ENCODE measurements at regions of chr10 and their contacts with region 1.

Region 1: DNA sequence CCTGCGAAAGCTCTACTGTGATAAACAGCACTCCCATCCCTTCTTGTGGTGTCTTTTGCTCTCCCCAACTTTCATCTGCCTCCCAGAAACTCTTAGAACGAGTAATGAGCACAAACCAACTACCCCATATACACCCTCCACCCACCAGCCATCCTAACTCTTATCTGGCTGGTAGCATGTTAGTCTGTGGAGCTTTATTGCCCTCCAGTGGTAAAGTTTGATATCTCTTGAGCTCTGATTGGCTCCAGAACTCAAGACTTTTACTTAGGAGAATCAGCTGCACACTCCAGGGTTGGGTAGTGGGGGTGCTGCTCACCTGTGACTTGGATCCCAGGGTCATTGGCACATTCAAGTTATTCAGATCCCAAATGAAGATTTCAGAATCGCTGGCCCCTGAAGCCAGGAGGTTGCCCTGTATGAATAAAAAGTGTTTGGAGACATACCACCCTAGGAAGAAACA is 10.9 kb downstream of the SEC31B start:
- DNase-seq: peak; percentile 56
- H3K4me3 Mint-ChIP-seq: peak overlapping the region; percentile 38
- H3K27ac Mint-ChIP-seq: peak overlapping the region; percentile 88
- H3K4me1 Mint-ChIP-seq: peaks cover 68% of the 10 kb centered on the region
- H3K27me3 Mint-ChIP-seq: no peaks in the 10 kb centered on the region

Region 2: DNA sequence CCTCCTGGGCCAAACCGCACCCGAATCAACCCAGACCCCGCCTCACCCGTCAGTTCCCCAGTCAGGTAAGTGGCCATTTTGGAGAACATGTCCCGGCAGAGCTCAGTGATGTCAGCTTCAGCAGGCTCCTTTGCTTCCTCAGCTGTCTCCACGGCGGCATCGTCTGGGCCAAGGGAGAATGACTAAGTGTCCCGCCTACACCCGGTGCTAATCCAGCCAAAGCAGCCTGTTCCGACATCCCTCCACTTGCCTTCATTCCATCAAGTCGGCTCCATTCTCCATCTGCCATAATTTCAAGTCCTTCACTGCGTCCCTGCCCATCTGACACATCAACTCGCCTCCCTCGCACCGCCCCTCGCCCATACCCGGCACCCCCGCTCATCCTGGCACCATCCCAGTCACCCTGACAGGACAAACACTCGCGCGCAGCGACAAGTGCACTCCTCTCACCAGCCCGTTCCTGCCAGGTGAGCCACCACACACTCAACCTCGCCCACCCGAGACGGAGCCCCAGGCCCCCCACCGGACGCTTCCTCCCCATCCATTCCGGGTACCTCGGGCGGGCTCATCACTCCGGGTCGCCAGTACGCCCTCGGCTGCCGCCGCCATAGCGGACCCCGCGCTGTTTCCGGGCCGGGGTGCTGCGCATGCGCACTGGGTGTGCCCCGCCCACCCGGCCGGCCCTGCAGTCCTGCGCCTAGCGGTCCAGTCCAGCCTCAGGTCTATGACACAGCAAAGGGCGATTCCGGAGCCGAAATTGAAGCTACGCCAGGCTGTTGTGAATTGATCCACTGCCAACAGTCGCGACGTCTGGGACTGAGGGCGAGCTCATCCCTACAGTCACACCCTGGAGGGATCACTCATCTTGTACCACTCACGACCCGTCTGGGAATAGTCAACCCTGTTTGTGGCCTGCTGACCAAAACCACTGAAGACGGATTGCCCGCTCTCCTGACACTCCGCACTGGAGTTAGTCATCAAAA is 222.4 kb before region 1 on chr10 and contains the start of gene BLOC1S2:
- CTCF ChIA-PET with region 1: interaction called, 3 read pairs
- POLR2A ChIA-PET with region 1: interaction called, 8 read pairs
- intact Hi-C with region 1: loop called (anchors 1 kb)
- DNase-seq: peak; percentile 91
- H3K4me3 Mint-ChIP-seq: peak within 1 kb of the TSS; percentile 98
- H3K27ac Mint-ChIP-seq: peak within 1 kb of the TSS; percentile 99
- H3K4me1 Mint-ChIP-seq: peaks cover 23% of the 10 kb centered on the region
- H3K27me3 Mint-ChIP-seq: peaks cover 1% of the 10 kb centered on the region
- total RNA-seq, gene BLOC1S2: 50.5 to 51.5 TPM

Region 3: DNA sequence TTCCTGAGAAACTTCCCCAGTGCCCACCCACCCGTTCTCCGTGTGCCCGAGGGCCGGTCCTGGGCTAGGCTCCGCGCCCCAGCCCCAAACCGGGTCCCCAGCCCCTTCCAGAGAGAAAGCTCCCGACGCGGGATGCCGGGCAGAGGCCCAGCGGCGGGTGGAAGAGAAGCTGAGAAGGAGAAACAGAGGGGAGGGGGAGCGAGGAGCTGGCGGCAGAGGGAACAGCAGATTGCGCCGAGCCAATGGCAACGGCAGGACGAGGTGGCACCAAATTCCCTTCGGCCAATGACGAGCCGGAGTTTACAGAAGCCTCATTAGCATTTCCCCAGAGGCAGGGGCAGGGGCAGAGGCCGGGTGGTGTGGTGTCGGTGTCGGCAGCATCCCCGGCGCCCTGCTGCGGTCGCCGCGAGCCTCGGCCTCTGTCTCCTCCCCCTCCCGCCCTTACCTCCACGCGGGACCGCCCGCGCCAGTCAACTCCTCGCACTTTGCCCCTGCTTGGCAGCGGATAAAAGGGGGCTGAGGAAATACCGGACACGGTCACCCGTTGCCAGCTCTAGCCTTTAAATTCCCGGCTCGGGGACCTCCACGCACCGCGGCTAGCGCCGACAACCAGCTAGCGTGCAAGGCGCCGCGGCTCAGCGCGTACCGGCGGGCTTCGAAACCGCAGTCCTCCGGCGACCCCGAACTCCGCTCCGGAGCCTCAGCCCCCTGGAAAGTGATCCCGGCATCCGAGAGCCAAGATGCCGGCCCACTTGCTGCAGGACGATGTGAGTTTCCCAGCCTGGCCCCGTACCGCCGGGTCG is 161.8 kb before region 1 on chr10 and contains the start of gene SCD:
- CTCF ChIA-PET with region 1: interaction called, 137 read pairs
- POLR2A ChIA-PET with region 1: interaction called, 28 read pairs
- intact Hi-C with region 1: loop called (anchors 1 kb)
- DNase-seq: peak; percentile 93
- H3K4me3 Mint-ChIP-seq: peak within 1 kb of the TSS; percentile 87
- H3K27ac Mint-ChIP-seq: peak within 1 kb of the TSS; percentile 81
- H3K4me1 Mint-ChIP-seq: peaks cover 39% of the 10 kb centered on the region
- H3K27me3 Mint-ChIP-seq: peaks cover 2% of the 10 kb centered on the region
- total RNA-seq, gene SCD: 156 to 158 TPM

Region 4: GRCh38 chr10:100438674-100439315 is 69.9 kb before region 1 on chr10:
- CTCF ChIA-PET with region 1: interaction called, 101 read pairs
- POLR2A ChIA-PET with region 1: no interaction called
- intact Hi-C with region 1: loop called (anchors 1 kb)
- DNase-seq: no peak
- H3K4me3 Mint-ChIP-seq: no peak overlapping the region
- H3K27ac Mint-ChIP-seq: no peak overlapping the region
- H3K4me1 Mint-ChIP-seq: peaks cover 2% of the 10 kb centered on the region
- H3K27me3 Mint-ChIP-seq: no peaks in the 10 kb centered on the region

Region 5: GRCh38 chr10:100496567-100496966 is 12.2 kb before region 1 on chr10:
- CTCF ChIA-PET with region 1: interaction called, 25 read pairs
- POLR2A ChIA-PET with region 1: interaction called, 3 read pairs
- intact Hi-C with region 1: no loop called
- DNase-seq: no peak
- H3K4me3 Mint-ChIP-seq: no peak overlapping the region
- H3K27ac Mint-ChIP-seq: no peak overlapping the region
- H3K4me1 Mint-ChIP-seq: peaks cover 2% of the 10 kb centered on the region
- H3K27me3 Mint-ChIP-seq: no peaks in the 10 kb centered on the region

Region 6: DNA sequence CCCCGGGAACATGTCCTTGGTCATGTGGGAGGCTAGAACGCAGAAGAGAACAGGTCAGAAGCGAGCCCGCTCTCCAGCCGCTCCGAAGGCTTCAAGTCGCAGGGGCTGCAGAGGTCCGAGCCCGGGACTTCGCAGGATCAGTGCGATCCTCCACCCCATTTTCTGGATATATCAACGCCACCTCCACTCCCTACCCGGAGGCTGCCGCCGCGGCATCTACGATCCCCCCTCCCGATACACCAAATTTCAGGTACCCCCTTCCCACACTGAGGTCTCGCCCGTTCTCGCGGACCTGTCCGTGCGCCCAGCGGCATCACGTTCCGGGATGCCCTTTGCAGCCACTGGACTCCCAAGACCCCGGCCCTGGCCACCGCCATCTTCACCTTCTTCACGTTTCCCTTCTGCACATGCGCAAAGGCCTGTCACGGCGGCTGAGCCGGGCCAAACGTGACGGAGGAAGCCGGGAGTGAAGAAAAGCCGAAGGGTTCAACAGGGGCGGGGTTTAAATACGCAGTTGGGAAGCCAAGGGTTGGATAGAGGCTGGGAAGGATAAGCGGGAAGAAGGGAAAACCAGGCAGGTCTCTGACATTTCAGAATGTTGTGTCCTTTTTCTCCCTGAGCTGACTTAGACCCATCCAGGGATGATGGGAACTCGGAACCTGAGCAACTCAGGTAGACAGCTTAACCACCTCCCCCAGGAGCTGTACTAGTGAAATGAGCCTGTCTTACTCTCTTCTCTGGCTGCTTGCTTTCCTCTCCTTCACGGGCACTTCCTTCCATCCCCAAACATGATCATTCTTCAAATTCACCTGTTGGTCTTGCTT is 21.0 kb after region 1 on chr10 and contains the start of gene NDUFB8:
- CTCF ChIA-PET with region 1: interaction called, 46 read pairs
- POLR2A ChIA-PET with region 1: interaction called, 26 read pairs
- intact Hi-C with region 1: loop called (anchors 1 kb)
- DNase-seq: peak; percentile 92
- H3K4me3 Mint-ChIP-seq: peak within 1 kb of the TSS; percentile 100
- H3K27ac Mint-ChIP-seq: peak within 1 kb of the TSS; percentile 96
- H3K4me1 Mint-ChIP-seq: peaks cover 33% of the 10 kb centered on the region
- H3K27me3 Mint-ChIP-seq: no peaks in the 10 kb centered on the region
- total RNA-seq, gene NDUFB8: 390 to 404 TPM

Region 7: DNA sequence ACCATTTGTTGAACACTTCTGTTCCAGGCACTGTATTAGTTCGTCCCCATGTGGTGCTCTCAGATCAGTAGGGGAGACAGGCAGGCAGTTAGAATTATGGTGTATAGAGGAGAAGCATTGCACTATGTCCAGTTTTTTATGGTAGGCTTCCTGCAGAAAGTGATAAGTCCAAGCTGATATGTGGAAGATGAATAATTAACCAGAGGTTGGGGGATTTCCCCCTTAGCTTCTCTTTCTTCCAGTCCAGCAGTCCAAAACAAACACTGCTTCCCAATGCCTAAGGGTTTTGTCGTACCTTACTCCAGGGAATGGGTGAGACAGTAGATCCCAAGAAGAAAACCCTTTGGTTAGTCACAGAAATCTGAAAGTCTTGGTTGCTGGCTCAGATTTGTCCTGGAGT is 46.2 kb after region 1 on chr10:
- CTCF ChIA-PET with region 1: no interaction called
- POLR2A ChIA-PET with region 1: no interaction called
- intact Hi-C with region 1: no loop called
- DNase-seq: no peak
- H3K4me3 Mint-ChIP-seq: no peak overlapping the region
- H3K27ac Mint-ChIP-seq: no peak overlapping the region
- H3K4me1 Mint-ChIP-seq: no peaks in the 10 kb centered on the region
- H3K27me3 Mint-ChIP-seq: no peaks in the 10 kb centered on the region

Region 8: DNA sequence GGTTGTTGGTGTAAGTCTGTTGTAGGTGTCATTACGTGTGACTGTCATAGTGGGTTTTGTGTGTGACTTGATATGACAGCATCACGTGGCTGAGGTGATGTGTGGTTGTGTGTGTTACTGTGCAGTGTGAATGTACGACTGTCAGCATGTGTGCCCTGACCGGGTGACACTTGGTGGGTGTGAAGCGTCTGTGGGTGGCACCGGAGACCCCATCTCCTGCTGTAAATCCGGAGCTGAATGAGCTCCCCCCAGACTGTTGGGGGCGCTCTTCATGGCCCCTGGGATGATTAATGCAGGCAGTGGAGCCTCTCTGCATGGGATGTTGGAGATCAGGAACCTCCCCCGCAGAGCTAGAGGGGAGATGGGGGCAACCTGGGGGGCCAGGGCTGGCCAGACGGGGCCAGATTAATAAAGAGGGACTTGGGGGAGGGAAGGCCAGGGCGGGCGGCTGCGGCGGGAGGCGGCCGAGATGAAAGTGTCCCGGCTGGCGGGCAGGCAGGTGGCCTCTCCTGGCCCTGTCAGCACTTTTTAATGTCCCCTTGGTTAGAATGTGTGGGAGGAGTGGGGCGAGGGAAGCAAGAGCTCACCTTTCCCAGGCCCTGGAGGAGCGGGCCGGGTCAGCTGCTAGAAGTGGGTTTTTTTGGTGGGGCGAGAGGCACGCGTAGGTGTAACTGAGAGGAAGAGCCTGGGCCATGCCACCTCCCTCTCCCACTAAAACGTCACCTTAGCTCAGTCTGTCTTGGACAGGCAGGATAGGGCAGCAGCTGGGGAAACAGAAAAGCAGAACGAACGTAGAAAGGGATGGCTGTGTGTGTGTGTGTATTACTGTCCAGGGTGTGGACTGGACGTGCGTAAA is 61.1 kb after region 1 on chr10:
- CTCF ChIA-PET with region 1: no interaction called
- POLR2A ChIA-PET with region 1: no interaction called
- intact Hi-C with region 1: no loop called
- DNase-seq: no peak
- H3K4me3 Mint-ChIP-seq: no peak overlapping the region
- H3K27ac Mint-ChIP-seq: no peak overlapping the region
- H3K4me1 Mint-ChIP-seq: no peaks in the 10 kb centered on the region
- H3K27me3 Mint-ChIP-seq: peaks cover 35% of the 10 kb centered on the region

Region 9: GRCh38 chr10:100653957-100654781 is 145.4 kb after region 1 on chr10:
- CTCF ChIA-PET with region 1: no interaction called
- POLR2A ChIA-PET with region 1: no interaction called
- intact Hi-C with region 1: no loop called
- DNase-seq: peak; percentile 65
- H3K4me3 Mint-ChIP-seq: peak overlapping the region; percentile 64
- H3K27ac Mint-ChIP-seq: no peak overlapping the region
- H3K4me1 Mint-ChIP-seq: peaks cover 23% of the 10 kb centered on the region
- H3K27me3 Mint-ChIP-seq: peaks cover 60% of the 10 kb centered on the region

Measured in activated CD4-positive, alpha-beta memory T cell treated with anti-CD3 and anti-CD28 coated beads for 36 hours (primary cell).